Mammary epithelial cell (primary cell): ENCODE measurements at regions of chr22 and their contacts with region 1.

Region 1: GRCh38 chr22:36470162-36470993 is 11.1 kb downstream of the TXN2 start:
- DNase-seq: peak; percentile 82
- H3K4me3 ChIP-seq: no peak overlapping the region
- H3K27ac ChIP-seq: peak overlapping the region; percentile 74
- H3K4me1 ChIP-seq: peaks cover 63% of the 10 kb centered on the region
- H3K27me3 ChIP-seq: no peaks in the 10 kb centered on the region
- CTCF ChIP-seq: peak; percentile 93 to 99

Region 2: GRCh38 chr22:36301384-36301828 is 169.0 kb before region 1 on chr22:
- CTCF ChIA-PET with region 1: no interaction called
- dilution Hi-C with region 1: no loop called
- in situ Hi-C with region 1: loop called (anchors 5 to 10 kb)
- intact Hi-C with region 1: loop called (anchors 1 kb)
- DNase-seq: peak; percentile 56
- H3K4me3 ChIP-seq: no peak overlapping the region
- H3K27ac ChIP-seq: no peak overlapping the region
- H3K4me1 ChIP-seq: peaks cover 12% of the 10 kb centered on the region
- H3K27me3 ChIP-seq: no peaks in the 10 kb centered on the region
- CTCF ChIP-seq: peak; percentile 88 to 98

Region 3: GRCh38 chr22:36331306-36331911 is 139.0 kb before region 1 on chr22:
- CTCF ChIA-PET with region 1: interaction called, 5 read pairs
- dilution Hi-C with region 1: no loop called
- in situ Hi-C with region 1: no loop called
- intact Hi-C with region 1: loop called (anchors 1 kb)
- DNase-seq: peak; percentile 97
- H3K4me3 ChIP-seq: no peak overlapping the region
- H3K27ac ChIP-seq: peak overlapping the region; percentile 99
- H3K4me1 ChIP-seq: peaks cover 98% of the 10 kb centered on the region
- H3K27me3 ChIP-seq: no peaks in the 10 kb centered on the region
- CTCF ChIP-seq: no peak

Region 4: DNA sequence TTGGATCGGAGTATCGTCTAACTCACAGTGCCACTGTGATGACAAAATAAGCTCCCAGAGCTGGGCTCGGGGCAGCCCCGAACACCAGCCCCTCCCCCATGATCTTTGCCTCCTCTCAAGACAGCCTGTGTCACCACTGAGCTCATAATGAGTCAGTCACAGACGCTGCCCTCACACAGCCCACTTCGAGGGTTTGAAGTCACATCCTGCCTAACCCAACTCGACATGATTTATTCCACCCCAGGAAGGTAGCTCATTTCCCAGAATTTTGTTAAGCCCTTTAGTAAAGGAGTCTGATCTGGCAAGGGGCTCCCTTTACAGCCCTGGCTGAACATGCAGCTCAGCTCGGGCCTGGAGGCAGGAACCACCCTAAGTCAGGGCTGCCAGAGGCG is 105.4 kb before region 1 on chr22:
- CTCF ChIA-PET with region 1: no interaction called
- dilution Hi-C with region 1: loop called (anchors 5 kb)
- in situ Hi-C with region 1: no loop called
- intact Hi-C with region 1: loop called (anchors 1 kb)
- DNase-seq: peak; percentile 97
- H3K4me3 ChIP-seq: no peak overlapping the region
- H3K27ac ChIP-seq: peak overlapping the region; percentile 76
- H3K4me1 ChIP-seq: peaks cover 95% of the 10 kb centered on the region
- H3K27me3 ChIP-seq: no peaks in the 10 kb centered on the region
- CTCF ChIP-seq: no peak

Region 5: DNA sequence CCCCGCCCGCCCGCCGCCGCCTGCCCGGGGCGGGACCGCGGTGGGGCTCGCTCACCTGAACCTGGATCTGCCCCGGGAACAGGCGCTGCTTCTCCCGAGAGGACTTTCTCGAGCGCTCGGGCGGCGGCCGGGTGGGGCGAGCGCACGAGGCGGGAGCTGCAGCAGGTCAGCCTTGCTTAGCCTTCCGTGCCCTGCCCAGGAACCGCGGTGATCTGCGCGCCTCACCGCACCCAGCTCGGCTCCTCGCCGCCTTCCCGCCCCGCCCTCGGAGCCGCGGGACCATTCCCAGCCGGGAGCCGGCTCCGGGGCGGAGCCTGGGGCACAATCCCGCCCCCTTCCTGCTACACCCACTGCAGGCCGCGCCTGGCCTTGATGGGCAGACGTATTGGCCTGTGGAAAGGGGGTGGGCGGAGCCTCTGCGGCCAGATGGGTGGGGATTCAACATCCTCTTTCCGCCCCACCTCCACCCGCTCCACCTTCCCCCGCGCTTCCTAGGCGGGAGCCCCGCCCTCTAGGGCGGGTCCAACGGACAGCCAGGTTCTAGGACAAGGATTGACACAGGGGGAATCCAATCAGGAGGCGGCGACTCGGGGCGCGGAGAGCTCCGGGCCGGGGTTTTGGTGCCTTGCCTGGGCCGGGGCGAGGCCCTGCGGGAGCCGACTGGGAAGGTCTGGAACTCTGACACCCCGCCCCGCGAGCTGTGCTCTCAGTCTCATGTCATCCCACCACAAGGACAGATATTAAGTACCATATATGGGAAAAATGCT is 82.4 kb before region 1 on chr22 and contains the start of gene MYH9:
- CTCF ChIA-PET with region 1: no interaction called
- dilution Hi-C with region 1: no loop called
- in situ Hi-C with region 1: loop called (anchors 5 to 10 kb)
- intact Hi-C with region 1: loop called (anchors 1 kb)
- DNase-seq: peak; percentile 100
- H3K4me3 ChIP-seq: peak within 1 kb of the TSS; percentile 56 to 90 (median 77)
- H3K27ac ChIP-seq: peak within 1 kb of the TSS; percentile 92
- H3K4me1 ChIP-seq: peaks cover 22% of the 10 kb centered on the region
- H3K27me3 ChIP-seq: no peaks in the 10 kb centered on the region
- CTCF ChIP-seq: no peak
- total RNA-seq, gene MYH9: 1,183 to 1,246 TPM

Region 6: DNA sequence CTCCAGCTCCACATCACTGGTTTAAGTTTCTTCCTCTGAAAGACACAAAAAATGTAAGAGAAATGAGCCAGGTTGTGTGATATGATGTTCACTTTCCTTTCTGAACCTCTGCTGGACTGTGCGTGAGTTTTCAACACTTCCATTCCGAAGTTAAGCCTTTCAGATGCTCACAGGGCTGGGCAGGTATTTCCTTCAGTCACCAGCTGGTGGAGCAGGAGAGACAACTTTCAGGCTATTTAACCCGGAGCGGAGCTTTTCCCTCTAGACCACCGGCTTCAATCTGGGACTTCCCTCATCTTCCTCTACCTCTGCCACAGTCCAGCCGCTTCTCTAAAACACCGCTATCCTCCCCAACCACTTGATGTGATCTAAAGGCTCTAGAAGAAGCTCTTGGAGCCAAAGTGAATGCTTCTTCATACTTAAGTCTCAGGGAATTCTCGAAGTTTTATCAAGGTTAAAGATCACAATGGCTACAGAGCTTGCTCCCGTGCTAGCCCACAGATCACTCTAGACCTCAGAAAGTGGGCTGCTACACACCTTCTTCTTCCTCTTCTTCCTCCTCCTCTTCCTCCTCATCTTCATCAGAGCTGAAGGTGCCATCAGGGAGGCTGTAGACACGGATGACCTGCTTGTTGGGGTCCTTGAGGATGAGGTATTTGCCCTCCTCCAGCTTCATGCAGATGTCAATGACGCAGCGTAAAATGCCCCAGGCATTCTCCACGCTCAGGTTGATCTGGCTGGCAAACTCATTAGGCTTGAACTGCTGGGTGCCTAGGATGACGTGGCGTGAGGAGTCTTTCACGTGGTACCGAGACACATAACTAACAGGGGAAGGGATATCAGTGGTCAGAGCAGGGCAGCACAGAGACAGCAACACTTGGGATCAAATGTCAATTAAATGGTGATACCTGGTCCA is 40.8 kb after region 1 on chr22:
- CTCF ChIA-PET with region 1: no interaction called
- dilution Hi-C with region 1: loop called (anchors 5 kb)
- in situ Hi-C with region 1: no loop called
- intact Hi-C with region 1: no loop called
- DNase-seq: peak; percentile 21
- H3K4me3 ChIP-seq: no peak overlapping the region
- H3K27ac ChIP-seq: no peak overlapping the region
- H3K4me1 ChIP-seq: peaks cover 12% of the 10 kb centered on the region
- H3K27me3 ChIP-seq: no peaks in the 10 kb centered on the region
- CTCF ChIP-seq: peak; percentile 67 to 68